Activated T-helper 2 cell treated with anti-CD3 and anti-CD28 coated beads, Interferon-gamma antibody, Interleukin-2, Interleukin-4, amounts not matched to agents 10 μg/mL and 5 μg/mL and 100 μg/mL, durations not matched to agents 14 hours and 24 hours and 36 hours (primary cell): ENCODE measurements at regions of chr4 and their contacts with region 1.

Region 1: GRCh38 chr4:98658287-98659105 is at the start of gene TSPAN5:
- DNase-seq: peak; percentile 75
- H3K4me3 Mint-ChIP-seq: peak within 1 kb of the TSS; percentile 100
- H3K27ac Mint-ChIP-seq: peak within 1 kb of the TSS; percentile 94
- H3K4me1 Mint-ChIP-seq: peaks cover 73% of the 10 kb centered on the region
- H3K27me3 Mint-ChIP-seq: no peaks in the 10 kb centered on the region
- total RNA-seq, gene TSPAN5: 21.1 and 24.4 TPM in 2 replicates

Region 2: GRCh38 chr4:98293104-98293887 is 365.2 kb before region 1 on chr4:
- intact Hi-C with region 1: loop called (anchors 5 kb)
- DNase-seq: no peak
- H3K4me3 Mint-ChIP-seq: no peak overlapping the region
- H3K27ac Mint-ChIP-seq: no peak overlapping the region
- H3K4me1 Mint-ChIP-seq: peaks cover 47% of the 10 kb centered on the region
- H3K27me3 Mint-ChIP-seq: no peaks in the 10 kb centered on the region

Region 3: DNA sequence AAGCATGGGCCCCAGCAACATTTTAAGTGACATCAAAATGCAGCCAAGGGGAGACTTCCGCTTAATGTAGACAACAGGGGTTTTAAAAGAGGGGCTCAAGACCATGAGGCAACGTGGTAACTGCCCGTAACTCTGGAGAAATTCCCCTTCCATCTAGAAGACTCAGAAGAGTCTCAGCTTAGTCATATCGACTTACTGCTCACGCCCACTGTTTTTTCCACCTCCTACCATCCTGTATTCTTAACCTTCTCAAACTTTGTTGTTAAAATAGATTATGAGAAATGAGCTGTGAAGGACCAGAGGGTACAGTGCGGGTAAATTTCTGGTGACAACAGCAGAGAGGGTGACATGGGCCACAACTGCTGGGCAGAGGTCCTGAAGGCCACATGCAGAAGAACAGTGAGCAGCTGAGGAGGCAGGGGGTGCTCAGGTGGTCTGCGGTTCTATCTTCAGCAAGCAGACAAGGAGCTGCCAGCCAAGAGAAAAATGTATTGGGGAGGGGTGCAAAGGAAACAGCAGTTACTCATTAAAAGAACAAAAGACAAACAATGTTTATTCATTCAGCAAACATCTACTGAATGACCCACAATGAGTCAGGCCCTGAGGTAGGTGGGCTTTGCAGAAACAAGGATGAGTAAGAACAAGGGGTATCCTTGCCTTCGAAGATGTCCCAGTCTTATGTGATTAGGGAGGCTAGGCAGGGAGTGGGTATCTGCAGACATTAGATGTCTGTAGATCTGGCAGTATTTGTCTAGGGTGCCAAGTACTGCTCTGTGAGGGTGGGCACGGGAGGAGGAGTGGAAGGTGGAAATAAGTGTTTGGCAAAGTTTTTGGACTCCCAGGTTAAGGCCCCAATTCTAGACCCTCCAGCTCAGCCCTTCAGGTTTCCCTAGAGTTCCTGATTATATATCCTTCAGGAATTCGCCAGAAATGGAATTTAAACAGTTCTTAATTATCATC is 175.4 kb before region 1 on chr4:
- intact Hi-C with region 1: loop called (anchors 1 kb)
- DNase-seq: no peak
- H3K4me3 Mint-ChIP-seq: peak overlapping the region; percentile 70
- H3K27ac Mint-ChIP-seq: peak overlapping the region; percentile 99
- H3K4me1 Mint-ChIP-seq: peaks cover 88% of the 10 kb centered on the region
- H3K27me3 Mint-ChIP-seq: no peaks in the 10 kb centered on the region

Region 4: DNA sequence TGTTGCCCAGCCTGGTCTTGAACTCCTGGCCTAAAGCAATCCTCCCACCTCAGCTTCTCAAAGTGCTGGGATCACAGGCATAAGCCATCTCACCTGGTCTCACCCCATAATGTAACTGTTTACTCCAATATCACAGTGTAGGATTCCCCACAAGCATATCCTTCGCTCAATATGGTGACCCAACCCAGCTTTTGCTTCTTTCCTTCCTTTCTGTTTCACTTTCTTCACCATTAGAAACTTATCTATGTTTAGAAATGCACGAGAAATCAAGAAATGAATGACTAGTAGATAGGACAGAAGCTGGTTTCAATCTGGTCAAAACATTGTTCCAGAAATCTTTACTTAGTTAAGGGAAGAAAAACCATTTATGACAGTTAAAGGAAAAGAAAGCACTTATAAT is 19.0 kb before region 1 on chr4:
- intact Hi-C with region 1: loop called (anchors 1 kb)
- DNase-seq: no peak
- H3K4me3 Mint-ChIP-seq: peak overlapping the region; percentile 66
- H3K27ac Mint-ChIP-seq: peak overlapping the region; percentile 81
- H3K4me1 Mint-ChIP-seq: peaks cover 44% of the 10 kb centered on the region
- H3K27me3 Mint-ChIP-seq: no peaks in the 10 kb centered on the region

Region 5: DNA sequence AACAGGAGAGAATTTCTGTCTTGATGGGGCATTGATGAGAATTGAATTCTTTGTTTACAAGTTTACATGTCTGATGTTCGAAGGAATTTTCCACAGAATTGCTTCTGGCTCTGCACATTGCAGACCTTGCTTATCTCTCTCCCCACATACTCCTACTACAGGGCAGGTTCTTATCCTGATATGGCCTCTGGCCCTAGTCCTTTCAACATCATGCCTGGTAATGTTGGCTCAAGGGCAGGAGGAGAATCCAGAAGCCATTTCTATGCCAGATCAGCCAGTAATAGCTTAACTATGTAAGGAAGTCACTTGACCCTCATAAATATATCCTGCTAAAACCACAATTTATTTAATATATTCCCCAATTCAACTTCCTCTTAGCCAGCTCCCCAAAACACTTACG is 24.2 kb after region 1 on chr4:
- intact Hi-C with region 1: no loop called
- DNase-seq: no peak
- H3K4me3 Mint-ChIP-seq: no peak overlapping the region
- H3K27ac Mint-ChIP-seq: no peak overlapping the region
- H3K4me1 Mint-ChIP-seq: peaks cover 5% of the 10 kb centered on the region
- H3K27me3 Mint-ChIP-seq: peaks cover 2% of the 10 kb centered on the region

Region 6: DNA sequence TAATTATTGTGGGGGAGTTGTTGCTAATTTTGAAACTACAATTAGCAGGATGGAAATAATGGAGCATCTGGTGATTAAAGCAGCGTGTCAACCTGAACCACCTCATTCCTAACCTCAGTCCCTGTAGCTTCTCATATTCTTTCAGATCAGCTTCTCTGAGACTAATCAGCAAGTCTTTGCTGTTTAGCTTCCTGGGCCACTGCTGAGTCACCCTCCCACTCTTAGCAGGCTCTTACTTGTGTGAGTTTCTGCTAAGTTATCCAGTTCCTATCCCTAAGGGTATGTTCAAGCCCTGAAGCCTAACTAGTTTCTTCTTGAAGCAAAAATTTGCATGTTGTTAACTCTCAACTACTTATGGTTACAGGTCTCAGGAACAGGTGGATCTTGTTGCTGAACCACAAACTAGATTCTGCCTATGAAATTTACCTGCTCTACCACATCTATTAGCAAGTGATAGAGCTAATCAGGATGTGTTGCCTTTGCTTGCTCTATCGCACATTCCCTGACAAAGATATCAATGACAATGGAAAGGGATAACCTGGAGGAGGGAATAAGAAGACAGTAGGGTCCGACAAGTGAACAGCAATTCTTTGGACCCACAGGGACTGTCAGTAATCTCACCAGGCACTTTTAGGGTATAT is 136.2 kb after region 1 on chr4:
- intact Hi-C with region 1: loop called (anchors 2 kb)
- DNase-seq: no peak
- H3K4me3 Mint-ChIP-seq: no peak overlapping the region
- H3K27ac Mint-ChIP-seq: no peak overlapping the region
- H3K4me1 Mint-ChIP-seq: peaks cover 10% of the 10 kb centered on the region
- H3K27me3 Mint-ChIP-seq: peaks cover 5% of the 10 kb centered on the region

Region 7: GRCh38 chr4:99054428-99054994 is 396.0 kb after region 1 on chr4:
- intact Hi-C with region 1: loop called (anchors 10 kb)
- DNase-seq: no peak
- H3K4me3 Mint-ChIP-seq: no peak overlapping the region
- H3K27ac Mint-ChIP-seq: peak overlapping the region; percentile 75
- H3K4me1 Mint-ChIP-seq: peaks cover 41% of the 10 kb centered on the region
- H3K27me3 Mint-ChIP-seq: no peaks in the 10 kb centered on the region